ENCODE measurements at regions of chr9 and their contacts with region 1.

Region 1: GRCh38 chr9:118522093-118523028 is 818.2 kb downstream of the TLR4 start:
- DNase-seq: peak; percentile 78
- H3K4me3 ChIP-seq: no peak overlapping the region
- H3K27ac ChIP-seq: no peak overlapping the region
- H3K4me1 ChIP-seq: no peaks in the 10 kb centered on the region
- H3K27me3 ChIP-seq: 0 out of 2 replicates have a peak, but pooled peaks cover 13% of the 10 kb centered on the region

Region 2: GRCh38 chr9:117644133-117644931 is 878.0 kb before region 1 on chr9:
- in situ Hi-C with region 1: loop called (anchors 25 kb)
- DNase-seq: peak; percentile 73
- H3K4me3 ChIP-seq: peak overlapping the region; percentile 61
- H3K27ac ChIP-seq: no peak overlapping the region
- H3K4me1 ChIP-seq: peaks cover 10% of the 10 kb centered on the region
- H3K27me3 ChIP-seq: peaks cover 17% of the 10 kb centered on the region

Measured in GM23248 (cell line).